MCF 10A (cell line): ENCODE measurements at regions of chr13 and their contacts with region 1.

Region 1: GRCh38 chr13:33953203-33953602 is 135.3 kb downstream of the RFC3 start:
- DNase-seq: peak; percentile 24
- H3K4me3 Mint-ChIP-seq: no peak overlapping the region
- H3K27ac Mint-ChIP-seq: no peak overlapping the region
- H3K4me1 Mint-ChIP-seq: no peaks in the 10 kb centered on the region
- H3K27me3 Mint-ChIP-seq: no peaks in the 10 kb centered on the region
- CTCF ChIP-seq: no peak

Region 2: GRCh38 chr13:33322543-33322809 is 630.7 kb before region 1 on chr13:
- CTCF ChIA-PET with region 1: no interaction called
- POLR2A ChIA-PET with region 1: no interaction called
- intact Hi-C with region 1: no loop called
- DNase-seq: no peak
- H3K4me3 Mint-ChIP-seq: no peak overlapping the region
- H3K27ac Mint-ChIP-seq: no peak overlapping the region
- H3K4me1 Mint-ChIP-seq: no peaks in the 10 kb centered on the region
- H3K27me3 Mint-ChIP-seq: no peaks in the 10 kb centered on the region
- CTCF ChIP-seq: no peak

Region 3: GRCh38 chr13:33940898-33941297 is 12.3 kb before region 1 on chr13:
- CTCF ChIA-PET with region 1: interaction called, 3 read pairs
- POLR2A ChIA-PET with region 1: interaction called, 15 read pairs
- intact Hi-C with region 1: no loop called
- DNase-seq: peak; percentile 91
- H3K4me3 Mint-ChIP-seq: no peak overlapping the region
- H3K27ac Mint-ChIP-seq: peak overlapping the region; percentile 90
- H3K4me1 Mint-ChIP-seq: peaks cover 11% of the 10 kb centered on the region
- H3K27me3 Mint-ChIP-seq: no peaks in the 10 kb centered on the region
- CTCF ChIP-seq: no peak

Region 4: DNA sequence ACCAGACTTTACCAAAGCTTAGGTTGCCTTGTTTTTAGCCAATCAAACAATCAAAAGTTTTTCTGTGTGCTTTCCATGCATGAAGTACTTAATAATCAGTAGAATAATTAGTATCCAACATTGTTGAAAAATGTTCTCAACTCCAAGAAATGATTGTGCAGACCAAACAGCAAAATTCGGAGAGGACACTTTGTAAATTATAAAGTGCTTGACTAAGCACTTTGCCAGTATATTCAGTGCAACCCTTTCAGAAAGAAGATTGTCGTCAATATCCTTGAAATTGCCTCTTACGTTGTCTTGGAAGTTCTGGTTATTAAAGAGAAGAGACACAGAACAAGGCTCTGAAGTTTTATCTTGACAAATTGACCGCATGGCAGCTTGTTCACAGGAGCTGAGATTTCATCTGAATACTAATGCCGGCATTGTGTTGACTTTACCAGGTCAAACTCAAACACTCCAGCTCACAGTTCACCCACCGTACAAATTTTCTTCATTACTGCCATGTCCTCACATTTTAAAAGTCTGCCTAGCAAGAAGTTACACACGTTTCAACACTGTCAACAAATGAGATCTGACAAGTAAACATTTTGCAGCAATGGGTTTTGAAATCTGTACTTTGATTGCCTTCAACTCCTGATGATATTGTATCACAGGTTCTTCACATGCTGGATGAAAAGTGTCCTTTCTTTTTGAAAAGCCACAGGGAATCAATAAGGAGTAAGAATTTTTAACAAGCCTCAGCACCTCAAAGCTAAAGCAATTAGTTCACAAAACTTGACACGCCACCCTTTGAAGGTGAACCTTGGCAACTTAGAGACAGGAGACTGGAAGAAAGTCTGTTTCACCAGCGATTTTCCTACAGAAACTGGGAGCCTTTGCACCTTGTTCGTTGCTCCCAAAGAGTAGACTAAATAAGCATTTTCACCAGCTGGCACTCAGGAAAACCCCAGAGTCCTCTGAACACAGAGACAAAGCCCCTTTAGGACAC is 15.6 kb after region 1 on chr13:
- CTCF ChIA-PET with region 1: no interaction called
- POLR2A ChIA-PET with region 1: no interaction called
- intact Hi-C with region 1: no loop called
- DNase-seq: no peak
- H3K4me3 Mint-ChIP-seq: no peak overlapping the region
- H3K27ac Mint-ChIP-seq: no peak overlapping the region
- H3K4me1 Mint-ChIP-seq: no peaks in the 10 kb centered on the region
- H3K27me3 Mint-ChIP-seq: no peaks in the 10 kb centered on the region
- CTCF ChIP-seq: no peak

Region 5: GRCh38 chr13:34533941-34534340 is 580.7 kb after region 1 on chr13:
- CTCF ChIA-PET with region 1: no interaction called
- POLR2A ChIA-PET with region 1: no interaction called
- intact Hi-C with region 1: no loop called
- DNase-seq: no peak
- H3K4me3 Mint-ChIP-seq: no peak overlapping the region
- H3K27ac Mint-ChIP-seq: no peak overlapping the region
- H3K4me1 Mint-ChIP-seq: no peaks in the 10 kb centered on the region
- H3K27me3 Mint-ChIP-seq: no peaks in the 10 kb centered on the region
- CTCF ChIP-seq: no peak